PC-9 (cell line): ENCODE measurements at regions of chr4 and their contacts with region 1.

Region 1: GRCh38 chr4:146793727-146794126 is 151.9 kb downstream of the TTC29 start:
- DNase-seq: no peak
- H3K4me3 ChIP-seq: no peak overlapping the region
- H3K27ac ChIP-seq: no peak overlapping the region
- H3K4me1 ChIP-seq: no peaks in the 10 kb centered on the region
- H3K27me3 ChIP-seq: no peaks in the 10 kb centered on the region
- CTCF ChIP-seq: no peak

Region 2: GRCh38 chr4:146646593-146647325 is 147.0 kb before region 1 on chr4:
- CTCF ChIA-PET with region 1: no interaction called
- POLR2A ChIA-PET with region 1: interaction called, 30 read pairs
- intact Hi-C with region 1: no loop called
- DNase-seq: no peak
- H3K4me3 ChIP-seq: no peak overlapping the region
- H3K27ac ChIP-seq: no peak overlapping the region
- H3K4me1 ChIP-seq: no peaks in the 10 kb centered on the region
- H3K27me3 ChIP-seq: no peaks in the 10 kb centered on the region
- CTCF ChIP-seq: no peak

Region 3: GRCh38 chr4:146661367-146661766 is 132.4 kb before region 1 on chr4:
- CTCF ChIA-PET with region 1: no interaction called
- POLR2A ChIA-PET with region 1: no interaction called
- intact Hi-C with region 1: no loop called
- DNase-seq: no peak
- H3K4me3 ChIP-seq: no peak overlapping the region
- H3K27ac ChIP-seq: no peak overlapping the region
- H3K4me1 ChIP-seq: no peaks in the 10 kb centered on the region
- H3K27me3 ChIP-seq: no peaks in the 10 kb centered on the region
- CTCF ChIP-seq: no peak